PC-3 (cell line): ENCODE measurements at regions of chr2 and their contacts with region 1.

Region 1: GRCh38 chr2:235746257-235747084 is 252.6 kb downstream of the AGAP1 start:
- DNase-seq: peak; percentile 81
- ATAC-seq: peak; percentile 97
- H3K4me3 ChIP-seq: no peak overlapping the region
- H3K27ac ChIP-seq: no peak overlapping the region
- H3K4me1 ChIP-seq: peaks cover 6% of the 10 kb centered on the region; the same call in 1 of the 2 replicates
- H3K27me3 ChIP-seq: no peaks in the 10 kb centered on the region
- CTCF ChIP-seq: peak; percentile 79

Region 2: DNA sequence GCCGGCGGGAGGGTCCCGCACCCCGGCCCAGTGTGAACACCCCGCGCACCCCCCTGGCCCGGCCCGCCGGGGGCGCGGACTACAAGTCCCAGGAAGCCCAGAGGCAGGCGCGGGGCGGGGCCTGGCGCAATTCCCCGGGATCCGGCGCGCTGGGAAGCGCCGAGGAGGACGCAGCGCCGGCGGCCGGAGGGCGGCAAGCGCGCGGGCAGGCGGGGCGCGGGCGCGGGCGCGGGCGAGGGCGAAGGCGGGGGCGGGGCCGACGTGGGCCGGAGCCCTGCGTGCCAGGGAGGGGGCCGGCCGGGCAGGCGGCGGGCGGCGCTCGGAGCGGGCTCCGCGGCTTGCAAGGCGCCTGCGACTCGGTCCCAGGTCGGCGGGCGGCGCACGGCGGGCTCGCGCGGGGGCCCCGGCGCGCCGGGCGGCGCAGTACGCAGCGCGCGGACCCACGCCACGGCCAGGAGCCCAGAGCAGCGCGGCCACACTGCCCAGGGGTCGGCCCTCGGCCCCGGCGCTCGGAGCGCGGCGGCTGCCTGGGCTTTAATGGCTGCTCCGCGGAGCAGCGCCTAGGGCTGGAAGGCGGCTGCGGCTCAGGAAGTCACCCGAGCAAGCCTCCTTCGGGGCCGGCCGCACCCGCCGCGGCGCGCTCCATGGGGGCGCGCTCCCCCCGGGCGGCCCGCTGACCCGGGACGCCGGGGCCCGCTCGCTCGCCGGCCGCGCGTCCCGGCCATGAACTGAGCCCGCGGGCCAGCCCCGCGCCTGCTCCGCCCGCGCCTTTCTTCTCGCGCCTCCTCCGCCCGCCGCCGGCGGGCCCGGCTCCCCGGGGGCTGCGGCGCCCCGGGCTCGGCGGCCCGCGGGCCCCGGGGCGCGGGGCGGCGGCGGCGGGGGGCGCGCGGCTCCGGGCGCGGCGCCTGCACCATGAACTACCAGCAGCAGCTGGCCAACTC is 252.4 kb before region 1 on chr2 and contains the start of gene AGAP1:
- CTCF ChIA-PET with region 1: no interaction called
- POLR2A ChIA-PET with region 1: no interaction called
- intact Hi-C with region 1: loop called (anchors 10 kb)
- DNase-seq: peak; percentile 90
- ATAC-seq: peak; percentile 80
- H3K4me3 ChIP-seq: peak within 1 kb of the TSS; percentile 81
- H3K27ac ChIP-seq: peak within 1 kb of the TSS; percentile 54
- H3K4me1 ChIP-seq: peaks cover 20% of the 10 kb centered on the region
- H3K27me3 ChIP-seq: no peaks in the 10 kb centered on the region
- CTCF ChIP-seq: no peak
- total RNA-seq, gene AGAP1: 28.6 and 31.0 TPM in 2 replicates

Region 3: DNA sequence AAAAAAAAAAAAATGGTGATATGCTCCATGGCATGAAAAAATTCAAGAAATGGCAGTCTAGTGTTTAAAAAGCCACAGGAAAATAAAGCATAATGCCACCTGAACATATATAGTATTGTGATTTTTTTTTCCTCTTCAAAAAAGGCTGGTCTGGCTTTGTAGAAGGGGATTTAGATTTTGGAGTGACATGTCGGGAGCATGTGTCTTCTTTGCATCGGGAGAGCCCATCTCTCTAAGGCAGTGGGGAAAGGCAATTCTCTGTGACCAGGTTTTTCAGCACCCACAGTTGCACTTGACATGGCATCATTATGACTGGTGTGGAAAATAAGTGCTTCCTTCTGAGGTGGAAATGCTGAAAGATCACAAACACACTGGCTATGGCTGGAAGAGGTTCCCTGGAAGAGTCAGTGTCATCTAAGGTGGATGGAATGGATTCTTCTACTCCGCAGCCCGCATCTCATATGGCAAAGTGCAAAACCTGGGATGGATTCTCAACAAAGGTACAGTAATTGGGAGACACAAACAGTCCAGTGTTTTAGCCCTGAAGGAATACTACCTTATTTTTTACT is 80.2 kb before region 1 on chr2:
- CTCF ChIA-PET with region 1: no interaction called
- POLR2A ChIA-PET with region 1: interaction called, 10 read pairs
- intact Hi-C with region 1: no loop called
- DNase-seq: peak; percentile 80
- ATAC-seq: peak; percentile 32
- H3K4me3 ChIP-seq: peak overlapping the region; percentile 66
- H3K27ac ChIP-seq: peak overlapping the region; percentile 42
- H3K4me1 ChIP-seq: peaks cover 22% of the 10 kb centered on the region
- H3K27me3 ChIP-seq: no peaks in the 10 kb centered on the region
- CTCF ChIP-seq: no peak

Region 4: DNA sequence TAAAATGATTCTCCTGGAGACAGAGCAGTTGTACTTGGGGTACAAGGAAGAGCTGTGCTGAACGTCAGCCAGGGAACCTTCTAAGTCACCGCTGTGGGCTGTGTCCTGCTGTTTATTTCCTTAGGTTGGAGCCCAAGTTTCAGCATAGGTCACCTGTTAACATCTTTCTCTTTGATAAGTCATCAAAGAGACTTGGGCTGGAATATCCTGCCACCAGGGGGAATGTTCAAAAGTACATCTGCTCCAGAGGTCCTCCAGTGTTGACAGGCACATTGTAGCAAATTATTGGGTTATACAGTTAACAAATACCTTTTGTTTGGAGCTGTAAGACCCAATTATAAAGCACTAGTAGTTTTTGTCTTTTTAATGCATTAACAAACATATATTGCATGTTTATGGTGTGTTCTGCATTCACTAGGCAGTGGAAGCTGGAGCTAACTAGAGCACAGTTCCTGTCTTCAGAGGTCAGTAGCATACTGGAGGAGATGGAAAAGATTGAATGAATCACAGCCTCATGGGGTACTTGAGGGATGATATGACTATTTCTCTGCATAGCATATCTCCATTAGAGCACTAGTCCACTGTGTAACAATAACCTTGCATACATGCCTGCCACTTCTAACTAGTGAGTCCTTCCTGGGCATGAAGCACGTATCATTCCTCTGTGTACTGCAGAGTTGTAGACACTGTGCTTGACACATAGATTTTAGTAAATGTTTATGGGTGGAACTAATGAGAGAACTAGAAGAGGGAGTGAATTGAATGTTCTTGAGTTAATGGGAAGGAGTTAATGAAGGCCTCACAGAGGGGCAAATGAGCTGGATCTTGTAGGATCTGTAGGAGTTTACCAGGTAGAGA is 70.6 kb before region 1 on chr2:
- CTCF ChIA-PET with region 1: interaction called, 13 read pairs
- POLR2A ChIA-PET with region 1: no interaction called
- intact Hi-C with region 1: loop called (anchors 2 kb)
- DNase-seq: peak; percentile 42
- ATAC-seq: peak; percentile 70
- H3K4me3 ChIP-seq: no peak overlapping the region
- H3K27ac ChIP-seq: no peak overlapping the region
- H3K4me1 ChIP-seq: peaks cover 50% of the 10 kb centered on the region
- H3K27me3 ChIP-seq: no peaks in the 10 kb centered on the region
- CTCF ChIP-seq: peak; percentile 51

Region 5: GRCh38 chr2:235709124-235709813 is 37.2 kb before region 1 on chr2:
- CTCF ChIA-PET with region 1: interaction called, 4 read pairs
- POLR2A ChIA-PET with region 1: interaction called, 7 read pairs
- intact Hi-C with region 1: loop called (anchors 5 kb)
- DNase-seq: peak; percentile 97
- ATAC-seq: peak; percentile 93
- H3K4me3 ChIP-seq: peak overlapping the region; percentile 48; the same call in 1 of the 2 replicates
- H3K27ac ChIP-seq: peak overlapping the region; percentile 96
- H3K4me1 ChIP-seq: peaks cover 48% of the 10 kb centered on the region
- H3K27me3 ChIP-seq: no peaks in the 10 kb centered on the region
- CTCF ChIP-seq: no peak

Region 6: GRCh38 chr2:236998236-236998635 is 1251.8 kb after region 1 on chr2:
- CTCF ChIA-PET with region 1: no interaction called
- POLR2A ChIA-PET with region 1: interaction called, 16 read pairs
- intact Hi-C with region 1: no loop called
- DNase-seq: peak; percentile 82
- ATAC-seq: peak; percentile 82
- H3K4me3 ChIP-seq: peak overlapping the region; percentile 54
- H3K27ac ChIP-seq: peak overlapping the region; percentile 95
- H3K4me1 ChIP-seq: peaks cover 40% of the 10 kb centered on the region
- H3K27me3 ChIP-seq: no peaks in the 10 kb centered on the region
- CTCF ChIP-seq: no peak